ENCODE measurements at regions of chr17 and their contacts with region 1.

Region 1: DNA sequence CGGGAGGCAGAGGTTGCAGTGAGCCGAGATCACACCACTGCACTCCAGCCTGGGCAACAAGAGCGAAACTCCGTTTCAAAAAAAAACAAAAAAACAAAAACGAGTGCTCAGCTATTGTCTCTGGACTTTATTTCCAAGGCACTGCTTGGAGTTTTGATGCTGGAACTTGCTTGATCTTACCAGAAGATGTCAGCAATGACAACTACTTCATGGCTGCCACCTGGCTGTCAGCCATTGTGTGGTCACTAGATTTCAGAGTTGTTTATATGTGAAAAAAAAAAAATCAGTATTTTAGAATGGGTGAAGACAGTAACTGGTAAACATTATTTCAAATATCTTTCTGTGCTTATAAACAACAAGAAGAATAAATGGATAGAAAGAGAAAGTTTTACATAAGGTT is 26.3 kb upstream of the OR4D1 start:
- DNase-seq: peak; percentile 76 to 85 (median 84)
- H3K4me3 ChIP-seq: no peak overlapping the region
- H3K27ac ChIP-seq: no peak overlapping the region
- H3K4me1 ChIP-seq: no peaks in the 10 kb centered on the region
- H3K27me3 ChIP-seq: peaks cover 0 to 3% (median 2%) of the 10 kb centered on the region in 5 experiments

Region 2: DNA sequence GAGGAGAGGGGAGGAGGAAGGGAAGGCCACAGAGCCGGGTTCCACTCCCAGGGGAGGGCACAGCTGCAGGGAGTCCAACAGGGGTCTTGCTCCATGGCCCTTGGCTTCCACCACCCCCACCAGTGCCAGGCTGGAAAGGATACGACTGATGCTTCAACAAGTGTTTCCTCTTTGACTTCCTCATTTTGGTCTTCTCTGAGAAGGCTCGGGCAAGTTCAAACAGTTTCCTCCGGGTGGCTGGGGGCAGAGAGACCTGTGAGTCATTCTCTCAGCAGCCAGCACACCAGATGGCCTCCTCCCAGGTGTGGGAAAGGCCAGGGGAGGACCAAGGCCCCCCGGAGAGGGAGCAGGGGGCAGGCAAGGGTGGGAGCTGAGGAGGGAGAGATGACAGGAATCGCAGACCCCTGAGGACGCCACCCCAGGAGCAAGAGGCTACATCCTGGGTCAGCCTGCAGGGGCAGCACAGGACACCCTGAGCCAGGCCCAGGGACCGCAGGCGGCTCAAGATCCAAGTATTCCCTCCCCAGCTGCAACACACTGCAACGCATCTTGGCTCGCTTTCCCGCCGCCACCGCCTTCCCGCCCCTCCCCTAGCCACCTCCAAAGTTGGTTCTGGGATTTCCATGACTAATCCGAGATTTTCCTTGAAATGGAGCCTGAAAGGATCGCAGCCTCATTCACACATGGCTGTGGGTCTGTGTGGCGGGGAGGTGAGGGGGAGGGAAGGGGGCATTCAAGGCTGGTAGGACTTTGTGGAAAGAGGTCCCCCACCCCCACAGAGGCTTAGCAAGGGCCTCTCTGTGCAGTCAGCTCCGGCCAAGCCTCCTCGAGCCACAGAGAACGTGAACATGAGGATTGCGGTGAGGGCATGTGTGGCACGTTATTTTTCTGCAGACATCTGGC is 253.7 kb before region 1 on chr17:
- CTCF ChIA-PET with region 1: no interaction called
- POLR2A ChIA-PET with region 1: no interaction called
- DNase-seq: peak; percentile 94 to 99 (median 99)
- H3K4me3 ChIP-seq: peak overlapping the region in 3 of 7 experiments; percentile 8 to 39 (median 17)
- H3K27ac ChIP-seq: peak overlapping the region; percentile 64 to 79
- H3K4me1 ChIP-seq: peaks cover 6 to 75% (median 72%) of the 10 kb centered on the region in 4 experiments
- H3K27me3 ChIP-seq: no peaks in the 10 kb centered on the region

Region 3: DNA sequence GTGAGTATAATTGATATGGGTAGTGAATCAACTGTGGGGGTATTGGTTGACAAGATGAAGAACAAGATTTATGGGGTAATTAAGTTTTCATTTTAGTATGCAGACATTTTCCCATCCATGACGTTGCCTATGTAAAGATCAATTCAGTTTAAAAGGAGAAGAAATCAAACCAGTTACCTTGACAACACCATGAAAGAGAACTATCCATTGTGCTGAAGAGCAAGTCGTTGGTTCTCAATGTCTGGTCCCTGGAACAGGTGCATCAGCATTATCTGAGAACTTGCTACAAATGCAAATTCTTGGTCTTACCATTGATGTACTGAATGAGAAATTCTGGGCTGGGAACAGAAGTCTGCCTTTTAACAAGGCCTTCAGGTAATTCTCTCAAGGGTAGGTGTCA is 44.1 kb after region 1 on chr17:
- CTCF ChIA-PET with region 1: interaction called, 15 read pairs
- POLR2A ChIA-PET with region 1: no interaction called
- DNase-seq: no peak
- H3K4me3 ChIP-seq: no peak overlapping the region
- H3K27ac ChIP-seq: no peak overlapping the region
- H3K4me1 ChIP-seq: peaks cover 0 to 11% (median 5%) of the 10 kb centered on the region in 4 experiments
- H3K27me3 ChIP-seq: peaks cover 0 to 3% (median 0%) of the 10 kb centered on the region in 5 experiments

Region 4: GRCh38 chr17:58172369-58173071 is 50.6 kb after region 1 on chr17:
- CTCF ChIA-PET with region 1: interaction called, 15 read pairs
- POLR2A ChIA-PET with region 1: no interaction called
- DNase-seq: peak; percentile 68 to 78 (median 75)
- H3K4me3 ChIP-seq: no peak overlapping the region
- H3K27ac ChIP-seq: no peak overlapping the region
- H3K4me1 ChIP-seq: peaks cover 0 to 15% (median 4%) of the 10 kb centered on the region in 4 experiments
- H3K27me3 ChIP-seq: peaks cover 0 to 9% (median 0%) of the 10 kb centered on the region in 5 experiments